ENCODE measurements at regions of chr10 and their contacts with region 1.

Region 1: GRCh38 chr10:29735596-29736318 is 101.0 kb upstream of the SVIL start:
- DNase-seq: peak; percentile 85 to 86
- ATAC-seq: peak; percentile 87 to 95 (median 92)
- H3K4me3 ChIP-seq: peak overlapping the region; percentile 73 to 97 (median 90)
- H3K27ac ChIP-seq: peak overlapping the region; percentile 93 to 99 (median 97)
- H3K4me1 ChIP-seq: peaks cover 5 to 34% (median 20%) of the 10 kb centered on the region in 9 donors
- H3K27me3 ChIP-seq: no peaks in the 10 kb centered on the region
- CTCF ChIP-seq: peak; percentile 90 to 98 (median 95)

Region 2: GRCh38 chr10:29535012-29535777 is 200.6 kb before region 1 on chr10:
- intact Hi-C with region 1: loop called in 3 of 10 experiments (anchors 10 kb)
- DNase-seq: peak in 1 of 2 donors; percentile 56
- ATAC-seq: peak; percentile 49 to 81 (median 72)
- H3K4me3 ChIP-seq: peak overlapping the region in 3 of 10 donors; percentile 3 to 21 (median 9)
- H3K27ac ChIP-seq: peak overlapping the region; percentile 28 to 85 (median 77)
- H3K4me1 ChIP-seq: peaks cover 6 to 58% (median 37%) of the 10 kb centered on the region in 9 donors
- H3K27me3 ChIP-seq: no peaks in the 10 kb centered on the region
- CTCF ChIP-seq: peak; percentile 35 to 70 (median 65)

Region 3: GRCh38 chr10:29598851-29599311 is 136.9 kb before region 1 on chr10:
- intact Hi-C with region 1: loop called in 4 of 10 experiments (anchors 5 to 10 kb)
- DNase-seq: peak in 1 of 2 donors; percentile 64
- ATAC-seq: peak; percentile 73 to 89 (median 84)
- H3K4me3 ChIP-seq: peak overlapping the region in 4 of 10 donors; percentile 0 to 10 (median 5)
- H3K27ac ChIP-seq: peak overlapping the region; percentile 64 to 87 (median 83)
- H3K4me1 ChIP-seq: peaks cover 4 to 97% (median 54%) of the 10 kb centered on the region in 9 donors
- H3K27me3 ChIP-seq: no peaks in the 10 kb centered on the region
- CTCF ChIP-seq: no peak

Region 4: DNA sequence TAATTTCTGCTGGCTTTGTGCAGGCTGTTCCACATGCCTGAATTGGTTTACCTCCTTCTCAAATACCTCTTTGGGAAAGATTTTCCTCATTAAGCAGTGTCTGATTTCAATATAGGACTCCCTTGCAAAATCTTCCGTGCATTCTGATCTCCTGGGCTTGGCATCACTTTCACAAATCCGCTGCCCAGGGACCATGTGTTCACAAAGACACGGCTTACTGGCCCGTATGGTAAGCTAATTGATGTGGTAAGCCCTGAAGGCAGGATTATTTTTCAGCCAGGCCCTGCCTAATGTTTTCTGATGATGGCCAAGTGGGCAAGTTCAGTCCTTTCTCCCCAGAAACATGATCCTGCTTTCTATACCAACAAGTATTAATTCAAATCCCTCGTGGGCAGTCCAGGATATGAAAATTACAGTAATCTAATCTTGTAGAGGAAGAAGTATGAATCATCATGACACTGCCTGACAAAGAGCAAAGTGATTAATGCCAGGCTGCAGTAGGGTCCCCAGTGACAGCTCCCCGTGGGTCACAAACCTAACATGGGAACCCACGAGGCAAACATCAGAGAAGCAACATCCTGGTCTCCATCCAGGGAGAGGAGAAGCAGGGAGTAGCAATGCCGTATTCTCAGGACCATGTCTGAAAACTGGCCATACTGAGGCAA is 89.4 kb before region 1 on chr10:
- intact Hi-C with region 1: loop called in 4 of 10 experiments (anchors 5 to 10 kb)
- DNase-seq: no peak
- ATAC-seq: peak in 4 of 8 donors; percentile 8 to 41 (median 18)
- H3K4me3 ChIP-seq: peak overlapping the region in 1 of 10 donors; percentile 18
- H3K27ac ChIP-seq: peak overlapping the region in 9 of 10 donors; percentile 16 to 72 (median 44)
- H3K4me1 ChIP-seq: peaks cover 6 to 67% (median 53%) of the 10 kb centered on the region in 9 donors
- H3K27me3 ChIP-seq: no peaks in the 10 kb centered on the region
- CTCF ChIP-seq: no peak

Region 5: DNA sequence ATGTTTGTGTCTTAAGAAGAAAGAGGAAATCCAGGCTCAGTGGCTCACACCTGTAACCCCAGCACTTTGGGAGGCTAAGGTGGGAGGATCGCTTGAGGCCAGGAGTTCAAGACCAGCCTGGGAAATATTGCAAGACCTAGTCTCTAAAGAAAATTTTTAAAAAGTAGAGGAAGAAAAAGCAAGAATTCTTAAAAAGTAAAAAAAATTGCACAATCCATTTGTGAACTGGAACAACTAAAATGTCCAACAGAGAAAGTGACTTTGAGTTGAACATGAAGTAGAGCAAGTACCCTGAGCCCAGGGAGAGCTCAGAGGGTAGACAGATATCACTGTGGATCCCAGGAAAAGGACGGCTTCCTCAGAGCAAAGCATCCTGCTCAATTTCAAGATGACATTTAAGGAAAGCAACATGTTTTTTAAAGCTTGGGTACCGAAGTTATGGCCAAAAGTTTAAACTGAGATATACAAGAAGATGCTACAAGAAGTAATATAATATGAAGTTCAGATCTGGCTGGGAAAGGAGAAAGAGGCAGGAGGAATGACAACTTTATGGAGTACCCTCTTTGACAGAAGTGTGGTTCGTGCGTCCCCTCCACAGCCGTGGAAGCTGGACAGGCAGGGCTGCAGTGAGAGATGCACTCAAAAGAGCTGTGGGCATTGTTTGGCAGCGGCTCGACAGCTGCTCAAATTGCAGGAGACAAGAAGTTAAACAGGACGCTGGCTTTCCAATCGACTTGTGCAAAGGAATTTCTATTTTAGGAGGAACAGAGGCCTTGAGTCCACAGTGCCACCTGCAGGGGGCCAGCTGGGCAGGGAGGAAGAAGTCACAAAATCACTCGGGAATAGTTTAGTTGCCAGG is 122.3 kb after region 1 on chr10:
- intact Hi-C with region 1: loop called in 8 of 10 experiments (anchors 2 to 10 kb)
- DNase-seq: peak; percentile 65 to 67
- ATAC-seq: peak; percentile 67 to 94 (median 87)
- H3K4me3 ChIP-seq: peak overlapping the region in 1 of 10 donors; percentile 12
- H3K27ac ChIP-seq: peak overlapping the region in 6 of 10 donors; percentile 5 to 59 (median 40)
- H3K4me1 ChIP-seq: peaks cover 0 to 13% (median 10%) of the 10 kb centered on the region in 9 donors
- H3K27me3 ChIP-seq: no peaks in the 10 kb centered on the region
- CTCF ChIP-seq: peak; percentile 45 to 81 (median 68)

Measured in heart right ventricle (tissue), 16 donors.